Panc1 (cell line): ENCODE measurements at regions of chr9 and their contacts with region 1.

Region 1: DNA sequence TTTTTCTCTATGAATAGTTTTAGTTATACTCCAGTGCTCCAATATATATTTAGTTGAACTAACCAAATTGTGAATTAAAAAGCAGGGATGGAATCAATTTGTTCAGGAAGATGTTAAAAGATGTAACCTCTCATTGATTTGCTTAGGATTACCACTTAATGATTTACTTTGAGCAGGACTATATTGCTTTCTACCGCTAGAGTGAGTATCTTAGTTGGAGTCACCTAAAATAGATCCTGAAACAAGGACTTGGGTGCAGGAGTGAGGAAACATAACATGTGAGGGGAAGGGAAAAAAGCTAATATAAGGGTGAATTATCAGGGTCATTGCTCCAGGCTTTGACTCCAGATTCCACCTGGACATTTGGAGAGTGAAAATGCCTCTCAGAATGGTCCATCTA is 2277.4 kb upstream of the C9orf72 start:
- DNase-seq: no peak
- ATAC-seq: no peak
- H3K4me3 ChIP-seq: no peak overlapping the region
- H3K27ac ChIP-seq: no peak overlapping the region
- H3K4me1 ChIP-seq: no peaks in the 10 kb centered on the region
- H3K27me3 ChIP-seq: no peaks in the 10 kb centered on the region
- CTCF ChIP-seq: no peak; the same call in 1 of the 2 replicates

Region 2: GRCh38 chr9:29830821-29831220 is 19.8 kb before region 1 on chr9:
- CTCF ChIA-PET with region 1: no interaction called
- POLR2A ChIA-PET with region 1: interaction called, 13 read pairs
- in situ Hi-C with region 1: no loop called
- intact Hi-C with region 1: no loop called
- DNase-seq: no peak
- ATAC-seq: peak; percentile 72; the same call in 1 of the 2 replicates
- H3K4me3 ChIP-seq: no peak overlapping the region
- H3K27ac ChIP-seq: no peak overlapping the region
- H3K4me1 ChIP-seq: no peaks in the 10 kb centered on the region
- H3K27me3 ChIP-seq: no peaks in the 10 kb centered on the region
- CTCF ChIP-seq: peak; percentile 61